Heart left ventricle (tissue), 16 donors: ENCODE measurements at regions of chr11 and their contacts with region 1.

Region 1: DNA sequence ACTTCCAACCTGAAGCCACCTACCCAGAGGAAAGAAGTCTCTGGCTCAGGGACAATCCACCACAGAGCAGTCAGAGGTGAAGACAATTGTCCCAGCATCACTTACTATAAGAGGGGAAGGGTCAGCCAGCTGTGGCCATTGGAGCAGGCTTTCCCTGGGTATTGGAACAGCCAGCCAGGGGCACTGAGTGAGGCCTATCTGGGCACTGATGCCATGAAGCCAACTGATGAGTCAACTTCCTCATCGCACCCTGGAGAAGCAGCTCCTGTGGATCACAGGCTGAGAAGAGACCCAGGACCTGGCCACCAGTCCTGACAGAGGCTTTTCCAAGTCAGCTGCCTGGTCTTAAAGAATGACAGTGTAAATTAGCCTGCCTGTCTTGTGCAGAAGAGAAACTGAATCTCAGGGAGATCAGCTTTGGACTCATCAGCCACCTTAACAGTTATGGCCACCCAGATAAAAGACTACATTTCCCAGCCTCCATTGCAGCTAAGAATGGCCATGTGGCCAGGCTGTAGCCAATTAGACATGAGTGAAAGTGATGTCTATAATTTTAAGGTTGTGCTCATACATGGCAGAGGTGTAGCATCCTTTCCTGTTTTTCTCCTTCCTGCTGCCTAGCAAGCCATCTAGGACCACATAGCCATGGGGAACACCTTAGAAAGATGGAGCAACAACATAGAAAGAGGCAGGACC is 19.0 kb downstream of the CHST1 start:
- DNase-seq: no peak
- ATAC-seq: peak in 2 of 4 donors; percentile 56 to 65
- H3K4me3 ChIP-seq: no peak overlapping the region
- H3K27ac ChIP-seq: no peak overlapping the region
- H3K4me1 ChIP-seq: peaks cover 0 to 10% (median 0%) of the 10 kb centered on the region in 12 donors
- H3K27me3 ChIP-seq: peaks cover 0 to 12% (median 0%) of the 10 kb centered on the region in 9 donors
- CTCF ChIP-seq: no peak
- POLR2A ChIP-seq: no peak

Region 2: GRCh38 chr11:45606514-45607281 is 39.7 kb before region 1 on chr11:
- intact Hi-C with region 1: loop called in 1 of 10 experiments (anchors 5 kb)
- DNase-seq: no peak
- ATAC-seq: no peak
- H3K4me3 ChIP-seq: no peak overlapping the region
- H3K27ac ChIP-seq: no peak overlapping the region
- H3K4me1 ChIP-seq: peaks cover 0 to 35% (median 11%) of the 10 kb centered on the region in 12 donors
- H3K27me3 ChIP-seq: peaks cover 0 to 7% (median 0%) of the 10 kb centered on the region in 9 donors
- CTCF ChIP-seq: no peak
- POLR2A ChIP-seq: no peak